ENCODE measurements at regions of chr1 and their contacts with region 1.

Region 1: DNA sequence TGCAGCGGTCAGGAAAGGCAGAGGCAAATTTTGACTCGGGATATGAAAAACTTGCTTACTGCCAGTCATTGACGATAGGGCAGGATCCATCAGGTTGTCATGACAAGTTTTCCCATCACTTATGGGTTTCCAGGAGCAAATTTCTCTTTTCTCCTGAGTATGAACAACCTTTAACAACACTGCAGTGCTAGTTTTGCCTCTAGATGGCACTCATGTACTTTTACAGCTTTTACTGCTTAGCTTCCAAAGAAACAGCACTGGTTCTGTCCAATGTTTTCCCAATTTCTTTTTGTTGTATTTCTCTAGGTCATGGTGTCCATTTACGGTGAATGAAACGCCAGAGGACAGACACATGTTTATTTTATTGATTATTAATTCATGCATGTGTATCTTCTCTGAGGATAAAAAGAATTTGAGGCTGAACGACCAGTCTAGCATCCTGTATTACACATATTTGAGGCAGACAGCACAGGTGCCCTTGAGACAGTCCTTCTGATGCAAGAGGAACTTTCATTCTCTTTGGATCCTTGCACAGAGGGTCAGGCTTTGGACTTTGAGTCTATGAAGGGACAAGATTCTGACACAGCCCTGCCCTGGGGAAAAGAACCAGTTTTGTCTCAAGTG is 112.3 kb upstream of the TRABD2B start:
- ATAC-seq: peak in 7 of 8 experiments; percentile 65 to 93 (median 80)
- H3K4me3 ChIP-seq: no peak overlapping the region
- H3K27ac ChIP-seq: no peak overlapping the region
- H3K4me1 ChIP-seq: peaks cover 6 to 13% of the 10 kb centered on the region in 2 donors

Region 2: GRCh38 chr1:48196237-48196636 is 86.7 kb after region 1 on chr1:
- in situ Hi-C with region 1: loop called in 5 of 9 experiments (anchors 10 to 25 kb)
- ATAC-seq: no peak
- H3K4me3 ChIP-seq: no peak overlapping the region
- H3K27ac ChIP-seq: no peak overlapping the region
- H3K4me1 ChIP-seq: peaks cover 0 to 5% of the 10 kb centered on the region in 2 donors

Region 3: DNA sequence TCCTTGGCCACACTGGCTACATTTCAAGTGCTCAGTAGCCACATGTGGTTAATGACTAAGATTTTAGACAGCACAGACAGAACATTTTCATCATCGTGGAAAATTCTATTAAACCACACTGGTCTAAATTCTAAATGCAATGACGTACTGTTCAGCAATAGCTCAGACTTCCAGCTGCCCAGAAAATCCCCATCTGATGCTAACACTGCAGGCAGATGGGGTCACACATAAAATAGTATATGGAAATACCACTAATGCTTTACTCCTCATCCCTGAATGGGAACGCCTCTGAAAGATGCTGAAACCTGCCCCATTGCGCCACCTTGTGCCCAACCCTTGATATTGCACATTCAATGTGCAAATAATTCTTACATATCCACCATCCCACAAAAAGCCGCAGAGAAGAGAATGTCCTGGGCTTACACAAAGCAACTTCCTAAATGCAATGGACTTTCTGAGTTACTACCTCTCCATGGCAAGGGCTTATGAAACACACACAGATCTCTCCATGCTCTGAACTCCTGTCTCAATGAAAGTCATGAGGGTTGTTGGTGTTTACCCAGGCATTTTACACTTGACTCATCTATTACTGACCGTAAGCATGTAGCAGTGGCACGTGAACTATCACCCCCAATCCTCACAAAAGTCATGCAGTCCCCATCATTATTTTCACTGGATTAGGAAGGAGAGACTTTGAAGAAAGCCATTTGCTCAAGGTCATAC is 92.7 kb after region 1 on chr1:
- in situ Hi-C with region 1: loop called in 5 of 9 experiments (anchors 10 to 25 kb)
- ATAC-seq: peak; percentile 37 to 99 (median 80)
- H3K4me3 ChIP-seq: no peak overlapping the region
- H3K27ac ChIP-seq: no peak overlapping the region
- H3K4me1 ChIP-seq: peaks cover 0 to 5% of the 10 kb centered on the region in 2 donors

Measured in motor neuron (in vitro differentiated cells).